MCF 10A (cell line): ENCODE measurements at regions of chr5 and their contacts with region 1.

Region 1: GRCh38 chr5:172860520-172861443 is 26.7 kb downstream of the ERGIC1 start:
- DNase-seq: peak; percentile 96
- H3K4me3 Mint-ChIP-seq: peak overlapping the region; percentile 50
- H3K27ac Mint-ChIP-seq: peak overlapping the region; percentile 75
- H3K4me1 Mint-ChIP-seq: peaks cover 64% of the 10 kb centered on the region
- H3K27me3 Mint-ChIP-seq: no peaks in the 10 kb centered on the region
- CTCF ChIP-seq: no peak

Region 2: DNA sequence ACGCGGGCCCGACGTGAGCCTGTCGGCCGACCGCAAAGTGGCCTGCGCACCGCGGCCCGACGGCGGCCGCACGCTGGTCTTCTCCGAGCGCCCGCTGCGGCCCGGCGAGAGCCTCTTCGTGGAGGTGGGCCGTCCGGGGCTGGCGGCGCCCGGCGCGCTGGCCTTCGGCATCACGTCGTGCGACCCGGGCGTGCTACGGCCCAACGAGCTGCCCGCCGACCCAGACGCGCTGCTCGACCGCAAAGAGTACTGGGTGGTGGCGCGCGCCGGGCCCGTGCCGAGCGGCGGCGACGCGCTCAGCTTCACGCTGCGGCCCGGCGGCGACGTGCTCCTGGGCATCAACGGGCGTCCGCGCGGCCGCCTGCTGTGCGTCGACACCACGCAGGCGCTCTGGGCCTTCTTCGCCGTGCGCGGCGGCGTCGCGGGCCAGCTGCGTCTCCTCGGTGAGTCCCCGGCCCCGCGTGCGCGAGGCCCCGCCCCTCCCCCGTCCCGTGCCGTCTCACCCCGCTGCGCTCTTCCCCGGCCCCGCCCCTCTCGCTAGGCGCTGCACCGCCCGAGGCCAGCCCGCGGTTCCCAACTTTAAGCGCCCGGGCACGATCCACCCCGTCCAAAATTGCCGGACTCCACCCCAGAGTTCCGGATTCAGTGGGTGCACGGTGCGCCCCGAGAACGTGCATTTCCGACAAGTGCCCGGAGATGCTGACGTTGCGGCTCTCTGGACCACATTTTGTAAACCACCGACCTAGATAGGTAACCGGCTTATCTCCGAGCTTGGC is 176.9 kb before region 1 on chr5:
- CTCF ChIA-PET with region 1: no interaction called
- POLR2A ChIA-PET with region 1: no interaction called
- intact Hi-C with region 1: no loop called
- DNase-seq: no peak
- H3K4me3 Mint-ChIP-seq: no peak overlapping the region
- H3K27ac Mint-ChIP-seq: no peak overlapping the region
- H3K4me1 Mint-ChIP-seq: no peaks in the 10 kb centered on the region
- H3K27me3 Mint-ChIP-seq: no peaks in the 10 kb centered on the region
- CTCF ChIP-seq: no peak

Region 3: DNA sequence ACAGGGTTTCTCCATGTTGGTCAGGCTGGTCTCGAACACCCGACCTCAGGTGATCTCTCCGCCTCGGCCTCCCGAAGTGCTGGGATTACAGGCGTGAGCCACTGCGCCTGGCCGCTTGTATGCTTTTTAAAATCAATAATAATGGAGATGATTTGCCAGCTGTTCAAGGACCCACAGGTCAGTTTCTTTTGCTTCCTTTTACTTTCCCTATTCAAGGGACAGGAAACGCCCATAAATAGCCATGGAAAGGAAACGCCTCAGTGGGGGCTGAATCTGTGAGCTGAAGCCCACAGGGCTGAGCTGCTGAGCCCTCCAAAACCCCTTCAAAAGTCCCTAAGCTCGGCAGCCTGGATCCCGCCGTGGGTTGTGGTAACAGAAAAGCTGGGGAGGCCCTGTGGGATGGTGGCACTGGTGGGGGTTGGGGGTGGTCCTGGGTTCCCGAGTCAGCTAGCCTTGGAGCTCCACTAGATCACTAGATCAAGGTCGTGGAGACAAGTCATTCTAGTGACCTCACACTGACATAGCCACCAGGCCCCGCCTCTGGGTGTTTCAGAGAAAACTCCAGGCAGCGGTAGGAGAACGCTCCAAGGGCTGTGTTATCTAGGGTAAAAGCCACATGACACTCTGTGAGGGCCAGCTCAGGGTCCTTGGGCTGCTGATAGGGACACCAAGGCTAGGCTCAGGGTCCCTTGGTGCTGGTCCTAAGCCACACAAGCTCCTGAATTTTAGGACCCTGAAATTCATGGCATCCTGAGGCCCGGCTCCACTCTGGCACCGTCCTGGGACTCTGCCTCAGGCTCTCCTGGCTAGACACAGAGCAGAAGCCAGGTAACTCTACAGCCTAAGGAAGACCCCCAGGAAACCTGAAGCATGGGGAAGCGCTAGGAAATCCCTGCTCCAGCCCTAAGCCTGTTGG is 71.8 kb before region 1 on chr5:
- CTCF ChIA-PET with region 1: no interaction called
- POLR2A ChIA-PET with region 1: no interaction called
- intact Hi-C with region 1: no loop called
- DNase-seq: no peak
- H3K4me3 Mint-ChIP-seq: no peak overlapping the region
- H3K27ac Mint-ChIP-seq: no peak overlapping the region
- H3K4me1 Mint-ChIP-seq: peaks cover 2% of the 10 kb centered on the region
- H3K27me3 Mint-ChIP-seq: no peaks in the 10 kb centered on the region
- CTCF ChIP-seq: no peak

Region 4: GRCh38 chr5:172849606-172850453 is 11.0 kb before region 1 on chr5:
- CTCF ChIA-PET with region 1: interaction called, 6 read pairs
- POLR2A ChIA-PET with region 1: interaction called, 28 read pairs
- intact Hi-C with region 1: no loop called
- DNase-seq: peak; percentile 68
- H3K4me3 Mint-ChIP-seq: no peak overlapping the region
- H3K27ac Mint-ChIP-seq: peak overlapping the region; percentile 49
- H3K4me1 Mint-ChIP-seq: peaks cover 78% of the 10 kb centered on the region
- H3K27me3 Mint-ChIP-seq: no peaks in the 10 kb centered on the region
- CTCF ChIP-seq: no peak

Region 5: GRCh38 chr5:172886974-172887501 is 26.3 kb after region 1 on chr5:
- CTCF ChIA-PET with region 1: interaction called, 6 read pairs
- POLR2A ChIA-PET with region 1: interaction called, 20 read pairs
- intact Hi-C with region 1: no loop called
- DNase-seq: peak; percentile 100
- H3K4me3 Mint-ChIP-seq: peak overlapping the region; percentile 61
- H3K27ac Mint-ChIP-seq: peak overlapping the region; percentile 98
- H3K4me1 Mint-ChIP-seq: peaks cover 46% of the 10 kb centered on the region
- H3K27me3 Mint-ChIP-seq: no peaks in the 10 kb centered on the region
- CTCF ChIP-seq: no peak

Region 6: DNA sequence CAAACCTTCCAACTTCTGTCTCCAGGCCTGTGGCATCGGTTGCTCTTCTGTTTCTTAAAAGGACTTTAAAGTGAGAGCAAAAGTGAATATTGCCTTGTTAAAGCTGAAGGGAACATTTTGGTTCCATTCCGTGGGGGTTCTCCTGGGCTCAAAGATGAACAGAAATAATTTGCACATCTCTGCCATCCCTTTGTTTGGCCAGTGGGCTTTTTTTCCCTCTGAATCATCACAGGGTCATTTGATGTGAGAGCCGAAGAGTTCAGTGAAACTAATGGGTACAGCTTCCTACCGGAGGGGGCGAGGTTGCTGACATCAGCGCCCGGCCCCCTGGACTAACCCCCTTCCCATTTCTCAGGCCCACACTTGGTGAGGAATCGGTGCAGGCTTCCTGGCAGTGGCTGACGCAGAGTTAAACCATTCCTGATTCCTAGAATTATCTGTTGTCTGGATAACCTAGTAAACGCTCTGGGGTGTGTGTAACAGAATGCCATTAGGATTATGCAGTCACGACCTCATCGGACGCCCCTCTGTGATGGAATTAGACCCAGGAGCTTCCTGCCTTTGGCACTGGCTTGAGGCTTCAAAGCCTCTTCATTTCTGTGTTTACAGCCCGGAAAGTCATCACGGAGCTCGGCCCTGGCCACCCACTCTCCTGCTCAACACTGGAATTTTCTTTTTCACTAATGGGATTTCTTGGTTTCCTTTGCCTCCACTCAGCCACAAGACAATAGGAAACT is 36.9 kb after region 1 on chr5:
- CTCF ChIA-PET with region 1: interaction called, 5 read pairs
- POLR2A ChIA-PET with region 1: interaction called, 35 read pairs
- intact Hi-C with region 1: loop called (anchors 5 kb)
- DNase-seq: peak; percentile 63
- H3K4me3 Mint-ChIP-seq: no peak overlapping the region
- H3K27ac Mint-ChIP-seq: peak overlapping the region; percentile 98
- H3K4me1 Mint-ChIP-seq: peaks cover 70% of the 10 kb centered on the region
- H3K27me3 Mint-ChIP-seq: no peaks in the 10 kb centered on the region
- CTCF ChIP-seq: no peak